KBM-7 (cell line): ENCODE measurements at regions of chr1 and their contacts with region 1.

Region 1: DNA sequence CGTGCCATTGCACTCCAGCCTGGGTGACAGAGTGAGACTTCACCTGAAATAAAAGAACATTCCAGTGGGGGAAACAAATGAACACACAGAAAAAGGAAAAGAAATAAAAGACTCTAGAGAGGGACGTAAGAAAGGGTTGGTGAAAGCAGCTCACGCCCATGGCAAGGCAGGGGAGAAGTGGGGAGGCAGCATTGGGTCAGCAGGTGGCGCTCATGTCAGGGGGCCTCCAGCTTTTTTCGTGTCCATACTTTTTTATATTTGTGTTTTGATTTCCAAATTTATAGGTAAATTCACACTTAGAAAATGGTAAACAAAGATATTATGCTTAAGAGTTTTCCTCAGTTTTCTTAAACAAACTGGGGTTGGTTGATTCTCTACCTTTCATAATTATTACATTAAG is 45.5 kb downstream of the VPS13D start:
- DNase-seq: peak; percentile 41

Region 2: GRCh38 chr1:12760256-12760795 is 485.0 kb after region 1 on chr1:
- in situ Hi-C with region 1: loop called (anchors 25 kb)
- DNase-seq: no peak